MCF 10A (cell line): ENCODE measurements at regions of chr18 and their contacts with region 1.

Region 1: GRCh38 chr18:50631831-50632285 is 72.0 kb downstream of the MAPK4 start:
- DNase-seq: no peak
- H3K4me3 Mint-ChIP-seq: no peak overlapping the region
- H3K27ac Mint-ChIP-seq: peak overlapping the region; percentile 71
- H3K4me1 Mint-ChIP-seq: peaks cover 35% of the 10 kb centered on the region
- H3K27me3 Mint-ChIP-seq: no peaks in the 10 kb centered on the region
- CTCF ChIP-seq: no peak

Region 2: GRCh38 chr18:49839012-49839411 is 792.8 kb before region 1 on chr18:
- CTCF ChIA-PET with region 1: no interaction called
- POLR2A ChIA-PET with region 1: no interaction called
- intact Hi-C with region 1: no loop called
- DNase-seq: peak; percentile 83
- H3K4me3 Mint-ChIP-seq: no peak overlapping the region
- H3K27ac Mint-ChIP-seq: peak overlapping the region; percentile 77
- H3K4me1 Mint-ChIP-seq: peaks cover 22% of the 10 kb centered on the region
- H3K27me3 Mint-ChIP-seq: no peaks in the 10 kb centered on the region
- CTCF ChIP-seq: no peak

Region 3: GRCh38 chr18:50614838-50615237 is 17.0 kb before region 1 on chr18:
- CTCF ChIA-PET with region 1: interaction called, 4 read pairs
- POLR2A ChIA-PET with region 1: interaction called, 3 read pairs
- intact Hi-C with region 1: loop called (anchors 1 kb)
- DNase-seq: peak; percentile 99
- H3K4me3 Mint-ChIP-seq: no peak overlapping the region
- H3K27ac Mint-ChIP-seq: no peak overlapping the region
- H3K4me1 Mint-ChIP-seq: peaks cover 20% of the 10 kb centered on the region
- H3K27me3 Mint-ChIP-seq: no peaks in the 10 kb centered on the region
- CTCF ChIP-seq: no peak

Region 4: DNA sequence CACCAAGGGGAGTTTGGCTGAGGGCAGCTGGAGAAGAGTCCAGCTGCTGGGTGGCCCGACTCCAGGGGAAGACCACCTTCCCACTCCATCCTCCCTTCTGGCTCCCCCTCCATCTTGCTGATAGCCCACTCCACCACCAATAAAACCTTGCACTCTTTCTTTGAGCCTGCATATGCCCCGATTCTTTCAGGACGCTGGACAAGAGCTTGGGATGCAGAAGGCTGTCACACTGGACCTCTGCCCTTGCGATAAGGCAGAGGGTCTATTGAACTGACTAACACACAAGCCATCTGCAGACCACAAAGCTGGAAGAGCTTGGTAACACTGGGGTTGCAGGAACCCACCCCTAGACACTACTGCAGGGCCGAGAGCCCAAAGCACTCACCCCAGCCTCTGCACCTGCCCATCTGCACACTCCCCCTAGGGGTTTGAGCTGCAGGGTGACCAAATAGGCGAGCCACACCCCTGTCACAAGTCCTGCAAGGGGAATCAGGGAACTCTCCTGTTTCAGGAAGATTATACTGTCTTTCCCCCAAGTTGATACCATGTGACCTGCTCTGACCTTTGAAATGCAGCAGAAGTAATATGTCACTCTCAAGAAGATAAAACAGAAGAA is 468.6 kb after region 1 on chr18:
- CTCF ChIA-PET with region 1: no interaction called
- POLR2A ChIA-PET with region 1: no interaction called
- intact Hi-C with region 1: no loop called
- DNase-seq: no peak
- H3K4me3 Mint-ChIP-seq: no peak overlapping the region
- H3K27ac Mint-ChIP-seq: no peak overlapping the region
- H3K4me1 Mint-ChIP-seq: no peaks in the 10 kb centered on the region
- H3K27me3 Mint-ChIP-seq: no peaks in the 10 kb centered on the region
- CTCF ChIP-seq: no peak